Tibial artery (tissue), 4 donors: ENCODE measurements at regions of chr21 and their contacts with region 1.

Region 1: DNA sequence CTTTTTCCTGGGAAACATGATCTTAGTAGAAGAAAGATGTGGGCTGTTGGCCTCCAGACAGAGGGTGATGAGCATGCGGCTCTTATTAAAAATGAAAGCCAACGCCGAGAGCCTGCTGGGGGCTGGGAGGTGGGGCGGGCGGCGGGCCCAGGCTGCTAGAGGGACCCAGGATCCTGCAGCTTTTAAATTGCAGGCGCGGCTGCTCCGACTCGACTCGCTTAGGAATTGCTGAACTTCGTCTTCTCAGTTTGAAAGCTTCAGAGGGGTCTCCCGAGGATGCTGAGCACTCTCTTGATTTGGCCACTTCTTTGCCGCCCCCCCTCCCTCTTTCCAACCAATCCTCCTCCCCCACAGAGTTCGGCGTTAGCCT is 1.2 kb downstream of the AGPAT3 start:
- DNase-seq: no peak
- H3K4me3 ChIP-seq: peak overlapping the region; percentile 76 to 91
- H3K27ac ChIP-seq: peak overlapping the region; percentile 83 to 85
- H3K4me1 ChIP-seq: peaks cover 0 to 29% (median 12%) of the 10 kb centered on the region in 4 donors
- H3K27me3 ChIP-seq: no peaks in the 10 kb centered on the region
- CTCF ChIP-seq: no peak

Region 2: DNA sequence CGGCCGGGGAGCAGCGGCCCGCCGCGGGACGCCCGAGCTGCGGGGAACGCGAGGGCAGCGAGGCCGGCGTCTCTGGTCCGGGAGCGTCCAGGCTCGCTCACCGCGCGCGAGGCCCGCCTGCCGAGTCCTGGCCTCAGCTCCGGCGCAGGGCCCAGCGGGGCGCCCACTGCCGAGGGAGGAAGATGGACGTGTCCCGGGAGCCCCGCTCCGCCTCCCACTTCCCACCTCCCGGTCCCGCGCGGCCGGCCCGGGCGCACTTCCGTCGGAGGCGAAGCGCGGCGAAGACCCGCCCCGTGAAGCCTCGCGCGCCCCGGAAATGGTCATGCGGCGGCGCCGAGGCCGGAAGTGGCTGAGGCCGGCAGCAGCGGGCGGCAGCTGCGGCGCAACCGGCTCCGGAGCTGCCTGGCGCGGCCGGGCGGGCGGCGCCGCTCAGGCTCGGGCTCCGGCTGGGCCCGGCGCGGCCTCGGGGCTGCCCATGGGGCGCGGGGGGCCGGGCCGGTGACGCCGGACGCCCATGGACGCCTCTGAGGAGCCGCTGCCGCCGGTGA is 145.8 kb after region 1 on chr21 and contains the start of gene TRAPPC10:
- intact Hi-C with region 1: loop called (anchors 10 kb)
- DNase-seq: peak; percentile 74 to 90
- H3K4me3 ChIP-seq: peak within 1 kb of the TSS; percentile 87 to 91
- H3K27ac ChIP-seq: peak within 1 kb of the TSS; percentile 97 to 99
- H3K4me1 ChIP-seq: peaks cover 0 to 36% (median 27%) of the 10 kb centered on the region in 4 donors
- H3K27me3 ChIP-seq: no peaks in the 10 kb centered on the region
- CTCF ChIP-seq: no peak